Activated B cell treated with CpG ODN at 0.5 μM for 24 hours (primary cell): ENCODE measurements at regions of chr18 and their contacts with region 1.

Region 1: DNA sequence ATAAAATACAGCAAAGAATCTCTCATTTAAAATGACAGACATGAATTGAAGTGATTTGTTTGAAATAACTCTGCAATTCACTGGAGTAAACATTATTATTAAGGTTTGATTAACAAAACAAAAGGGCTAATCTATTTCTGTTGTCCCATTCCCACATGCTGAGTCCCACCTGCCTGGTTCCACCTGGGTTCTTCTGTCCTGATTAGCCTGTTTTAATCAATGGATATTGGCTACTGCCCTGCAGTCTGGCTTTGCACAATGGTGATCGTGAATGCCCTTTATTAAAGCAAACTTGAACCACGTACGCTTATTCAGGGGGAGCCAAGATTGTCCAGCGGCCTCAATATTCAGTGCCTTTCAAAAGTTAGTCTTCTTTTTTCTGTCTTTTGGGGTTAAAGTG is 72.8 kb upstream of the CDH19 start:
- DNase-seq: no peak
- ATAC-seq: no peak
- H3K4me3 Mint-ChIP-seq: no peak overlapping the region
- H3K27ac Mint-ChIP-seq: no peak overlapping the region
- H3K4me1 Mint-ChIP-seq: no peaks in the 10 kb centered on the region
- H3K27me3 Mint-ChIP-seq: no peaks in the 10 kb centered on the region
- CTCF ChIP-seq: no peak

Region 2: DNA sequence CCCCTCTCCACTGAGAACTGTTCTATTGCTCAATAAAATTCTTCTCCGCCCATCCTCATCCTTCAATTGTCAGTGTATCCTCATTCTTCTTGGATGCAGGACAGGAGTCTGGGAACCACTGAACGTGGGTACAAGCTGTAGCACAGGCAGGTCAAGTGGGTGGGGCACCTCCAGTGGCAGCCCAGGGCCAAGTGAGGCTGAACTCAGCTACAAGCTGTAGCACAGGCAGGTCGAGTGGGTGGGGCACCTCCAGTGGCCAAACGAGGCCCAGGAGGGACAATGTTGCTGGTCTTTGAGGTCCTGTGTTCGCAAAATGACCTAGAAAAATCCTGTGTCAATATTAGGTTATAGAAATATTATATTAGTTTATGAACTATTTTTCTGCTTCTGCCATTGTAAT is 1686.2 kb after region 1 on chr18:
- CTCF ChIA-PET with region 1: no interaction called
- POLR2A ChIA-PET with region 1: no interaction called
- intact Hi-C with region 1: loop called (anchors 5 kb)
- DNase-seq: no peak
- ATAC-seq: no peak
- H3K4me3 Mint-ChIP-seq: no peak overlapping the region
- H3K27ac Mint-ChIP-seq: no peak overlapping the region
- H3K4me1 Mint-ChIP-seq: no peaks in the 10 kb centered on the region
- H3K27me3 Mint-ChIP-seq: no peaks in the 10 kb centered on the region
- CTCF ChIP-seq: no peak